ENCODE measurements at regions of chr20 and their contacts with region 1.

Region 1: GRCh38 chr20:56606174-56606884 is 22.8 kb upstream of the TFAP2C start:
- DNase-seq: peak; percentile 95 to 98
- H3K4me3 ChIP-seq: peak overlapping the region; percentile 25; the same call in 1 of the 2 replicates
- H3K27ac ChIP-seq: peak overlapping the region; percentile 94
- H3K4me1 ChIP-seq: peaks cover 65% of the 10 kb centered on the region
- H3K27me3 ChIP-seq: no peaks in the 10 kb centered on the region
- CTCF ChIP-seq: no peak

Region 2: GRCh38 chr20:56566271-56566981 is 39.9 kb before region 1 on chr20:
- CTCF ChIA-PET with region 1: no interaction called
- POLR2A ChIA-PET with region 1: no interaction called
- intact Hi-C with region 1: loop called (anchors 1 kb)
- DNase-seq: peak; percentile 66 to 97
- H3K4me3 ChIP-seq: peak overlapping the region; percentile 21; the same call in 1 of the 2 replicates
- H3K27ac ChIP-seq: peak overlapping the region; percentile 78
- H3K4me1 ChIP-seq: peaks cover 28% of the 10 kb centered on the region
- H3K27me3 ChIP-seq: no peaks in the 10 kb centered on the region
- CTCF ChIP-seq: no peak

Region 3: GRCh38 chr20:56592817-56593216 is 13.5 kb before region 1 on chr20:
- CTCF ChIA-PET with region 1: interaction called, 4 read pairs
- POLR2A ChIA-PET with region 1: no interaction called
- intact Hi-C with region 1: loop called (anchors 1 kb)
- DNase-seq: no peak
- H3K4me3 ChIP-seq: no peak overlapping the region; the same call in 1 of the 2 replicates
- H3K27ac ChIP-seq: peak overlapping the region; percentile 84
- H3K4me1 ChIP-seq: peaks cover 52% of the 10 kb centered on the region
- H3K27me3 ChIP-seq: no peaks in the 10 kb centered on the region
- CTCF ChIP-seq: no peak

Region 4: GRCh38 chr20:56616716-56617115 is 10.4 kb after region 1 on chr20:
- CTCF ChIA-PET with region 1: interaction called, 5 read pairs
- POLR2A ChIA-PET with region 1: interaction called, 24 read pairs
- intact Hi-C with region 1: no loop called
- DNase-seq: no peak
- H3K4me3 ChIP-seq: no peak overlapping the region
- H3K27ac ChIP-seq: no peak overlapping the region
- H3K4me1 ChIP-seq: peaks cover 7% of the 10 kb centered on the region
- H3K27me3 ChIP-seq: no peaks in the 10 kb centered on the region
- CTCF ChIP-seq: no peak

Measured in PC-9 (cell line).